ENCODE measurements at regions of chr5 and their contacts with region 1.

Region 1: GRCh38 chr5:145825751-145826180 is 9.4 kb downstream of the PRELID2 start:
- DNase-seq: peak; percentile 61
- H3K4me3 ChIP-seq: no peak overlapping the region
- H3K27ac ChIP-seq: no peak overlapping the region
- H3K4me1 ChIP-seq: no peaks in the 10 kb centered on the region
- CTCF ChIP-seq: peak; percentile 95

Region 2: DNA sequence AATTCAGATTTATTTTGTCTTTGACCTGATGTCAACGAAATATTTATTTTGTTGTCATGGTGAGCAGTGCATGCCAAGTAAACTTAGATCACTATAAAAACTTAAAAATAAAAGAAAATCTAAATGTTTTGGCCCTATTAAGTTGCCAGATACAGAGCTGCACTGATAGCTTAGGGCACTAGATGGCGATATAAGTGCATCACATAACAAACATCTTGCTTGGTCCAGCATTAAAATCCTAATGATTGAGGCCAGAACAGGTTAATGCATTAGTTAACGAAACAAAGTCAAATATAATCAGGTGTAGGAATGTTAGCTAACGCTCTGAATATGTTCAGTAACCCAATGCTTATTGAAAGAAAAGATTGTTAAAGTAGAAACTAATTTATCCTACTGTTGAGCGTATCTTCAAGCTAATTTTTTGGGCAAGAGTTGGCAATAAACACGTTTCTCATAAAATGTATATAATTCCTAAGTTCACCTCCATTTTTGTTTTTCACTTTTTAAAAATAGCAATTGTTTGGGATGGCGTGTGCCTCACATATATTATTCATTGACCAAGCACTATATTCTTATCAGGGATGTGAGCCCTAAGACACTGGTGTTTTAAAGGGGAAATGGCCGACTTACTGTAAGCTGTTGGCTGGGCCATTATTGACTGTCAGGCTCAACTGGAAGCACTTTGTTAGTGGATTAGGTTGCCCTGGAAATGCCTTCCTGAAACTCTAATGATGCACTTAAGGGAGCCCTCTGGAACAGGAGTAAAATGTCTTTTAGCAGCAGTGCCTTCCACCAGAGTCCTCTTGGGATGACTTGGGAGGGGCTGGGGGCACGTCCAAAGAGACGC is 1621.8 kb before region 1 on chr5:
- CTCF ChIA-PET with region 1: no interaction called
- POLR2A ChIA-PET with region 1: no interaction called
- intact Hi-C with region 1: loop called (anchors 5 kb)
- DNase-seq: peak; percentile 64
- H3K4me3 ChIP-seq: no peak overlapping the region
- H3K27ac ChIP-seq: no peak overlapping the region
- H3K4me1 ChIP-seq: no peaks in the 10 kb centered on the region
- CTCF ChIP-seq: peak; percentile 94

Region 3: DNA sequence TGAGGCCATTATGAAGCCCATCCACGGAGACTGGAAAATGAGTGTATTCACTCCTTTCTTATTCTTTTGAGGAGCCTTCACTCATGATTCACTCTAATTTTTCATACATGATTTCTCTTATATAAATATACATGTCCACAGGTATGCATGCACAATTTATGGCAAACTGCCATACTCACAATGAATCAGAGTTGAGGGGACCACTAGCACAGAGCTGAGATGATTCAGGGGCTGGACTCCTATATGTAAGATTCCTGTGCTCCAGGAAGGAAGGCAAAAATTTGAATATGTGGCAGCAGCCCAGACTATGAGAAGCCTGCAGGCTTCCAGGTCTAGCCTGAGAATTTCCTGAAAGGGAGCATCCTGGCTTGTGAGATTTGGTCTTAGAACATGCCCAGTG is 475.3 kb before region 1 on chr5:
- CTCF ChIA-PET with region 1: no interaction called
- POLR2A ChIA-PET with region 1: no interaction called
- intact Hi-C with region 1: no loop called
- DNase-seq: no peak
- H3K4me3 ChIP-seq: no peak overlapping the region
- H3K27ac ChIP-seq: no peak overlapping the region
- H3K4me1 ChIP-seq: no peaks in the 10 kb centered on the region
- CTCF ChIP-seq: no peak

Region 4: GRCh38 chr5:145681686-145682085 is 144.1 kb before region 1 on chr5:
- CTCF ChIA-PET with region 1: no interaction called
- POLR2A ChIA-PET with region 1: interaction called, 3 read pairs
- intact Hi-C with region 1: loop called (anchors 2 kb)
- DNase-seq: peak; percentile 78
- H3K4me3 ChIP-seq: no peak overlapping the region
- H3K27ac ChIP-seq: no peak overlapping the region
- H3K4me1 ChIP-seq: no peaks in the 10 kb centered on the region
- CTCF ChIP-seq: peak; percentile 89

Region 5: DNA sequence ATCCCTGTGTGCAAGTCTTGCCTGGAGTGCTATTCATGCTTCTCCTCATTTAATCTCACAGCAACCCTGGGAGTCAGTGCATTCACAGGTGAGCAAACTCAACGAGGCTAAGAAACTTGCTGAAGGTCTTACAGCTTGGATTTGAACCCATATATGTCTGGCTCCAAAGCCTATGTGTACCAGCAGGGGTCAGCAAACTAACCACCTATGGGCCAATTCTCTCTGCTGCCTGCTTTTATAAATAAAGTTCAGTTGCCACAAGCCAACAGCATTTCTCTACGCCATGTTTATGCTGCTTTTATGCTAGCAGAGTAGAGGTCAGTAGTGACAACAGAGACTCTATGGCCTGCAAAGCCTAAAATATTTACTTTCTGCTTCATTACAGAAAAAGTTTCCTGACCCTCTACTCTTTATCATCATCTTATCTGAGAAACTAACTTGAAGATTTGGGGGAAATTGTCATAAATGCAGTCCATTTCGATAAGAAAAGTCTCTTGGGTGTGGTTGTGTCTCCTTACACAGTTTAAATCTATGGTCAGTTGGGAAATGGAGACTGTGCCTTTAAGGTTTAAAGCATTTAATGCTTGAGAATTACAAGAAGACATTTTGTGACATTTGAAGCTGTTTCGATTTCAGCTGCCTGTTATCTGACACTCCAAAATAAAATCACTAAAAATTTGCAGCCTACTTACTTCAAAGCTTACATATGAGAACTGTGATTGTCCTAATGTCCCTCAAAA is 128.3 kb before region 1 on chr5:
- CTCF ChIA-PET with region 1: no interaction called
- POLR2A ChIA-PET with region 1: interaction called, 3 read pairs
- intact Hi-C with region 1: loop called (anchors 5 kb)
- DNase-seq: peak; percentile 34
- H3K4me3 ChIP-seq: no peak overlapping the region
- H3K27ac ChIP-seq: no peak overlapping the region
- H3K4me1 ChIP-seq: no peaks in the 10 kb centered on the region
- CTCF ChIP-seq: peak; percentile 76

Region 6: GRCh38 chr5:146130440-146131045 is 304.8 kb after region 1 on chr5:
- CTCF ChIA-PET with region 1: no interaction called
- POLR2A ChIA-PET with region 1: interaction called, 3 read pairs
- intact Hi-C with region 1: loop called (anchors 5 kb)
- DNase-seq: peak; percentile 37
- H3K4me3 ChIP-seq: no peak overlapping the region
- H3K27ac ChIP-seq: no peak overlapping the region
- H3K4me1 ChIP-seq: no peaks in the 10 kb centered on the region
- CTCF ChIP-seq: peak; percentile 89

Region 7: GRCh38 chr5:146426853-146427618 is 601.3 kb after region 1 on chr5:
- CTCF ChIA-PET with region 1: no interaction called
- POLR2A ChIA-PET with region 1: no interaction called
- intact Hi-C with region 1: loop called (anchors 2 kb)
- DNase-seq: peak; percentile 59
- H3K4me3 ChIP-seq: no peak overlapping the region
- H3K27ac ChIP-seq: no peak overlapping the region
- H3K4me1 ChIP-seq: no peaks in the 10 kb centered on the region
- CTCF ChIP-seq: peak; percentile 91

Region 8: GRCh38 chr5:146516151-146516475 is 690.3 kb after region 1 on chr5 and contains the start of gene GPR151:
- CTCF ChIA-PET with region 1: no interaction called
- POLR2A ChIA-PET with region 1: no interaction called
- intact Hi-C with region 1: no loop called
- DNase-seq: no peak
- H3K4me3 ChIP-seq: no peak within 1 kb of the TSS
- H3K27ac ChIP-seq: no peak within 1 kb of the TSS
- H3K4me1 ChIP-seq: no peaks in the 10 kb centered on the region
- CTCF ChIP-seq: no peak
- total RNA-seq, gene GPR151: not detected in 2 replicates